Activated B cell treated with CpG ODN at 0.5 μM for 24 hours (primary cell): ENCODE measurements at regions of chrX and their contacts with region 1.

Region 1: DNA sequence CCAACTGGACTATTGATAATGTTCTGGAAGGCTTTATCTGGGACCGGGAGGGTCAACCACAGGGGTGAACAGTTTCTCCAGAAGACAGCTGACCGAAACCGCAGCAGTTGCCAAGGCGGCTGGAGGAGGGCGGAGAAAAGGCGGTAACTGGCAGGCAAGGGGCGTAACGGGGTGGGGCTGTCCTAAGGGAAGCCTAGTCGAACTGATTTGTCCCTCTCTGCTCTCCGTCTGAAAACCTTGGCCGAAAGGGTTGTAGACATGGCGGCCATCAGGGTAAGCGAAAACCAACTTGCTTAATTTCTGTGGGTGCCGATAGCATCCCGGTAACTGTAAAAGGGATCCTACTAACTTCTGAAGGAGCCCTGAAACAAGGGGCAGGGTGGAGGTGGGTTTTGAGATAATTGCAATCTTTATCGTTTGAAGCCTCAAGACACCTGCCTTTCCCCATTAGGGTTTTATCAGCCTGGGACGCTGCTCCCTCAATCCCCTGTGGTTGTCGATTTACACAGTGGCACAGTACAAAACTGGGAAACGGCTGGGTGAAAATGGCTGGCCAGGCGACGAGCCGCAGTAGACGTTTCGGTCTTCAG is at the start of gene APOOL:
- DNase-seq: peak; percentile 55
- ATAC-seq: peak; percentile 98
- H3K4me3 Mint-ChIP-seq: peak within 1 kb of the TSS; percentile 89
- H3K27ac Mint-ChIP-seq: peak within 1 kb of the TSS; percentile 71
- H3K4me1 Mint-ChIP-seq: peaks cover 13% of the 10 kb centered on the region
- H3K27me3 Mint-ChIP-seq: no peaks in the 10 kb centered on the region
- CTCF ChIP-seq: no peak
- total RNA-seq, gene APOOL: 13.4 and 14.6 TPM in 2 replicates

Region 2: GRCh38 chrX:84188320-84188834 is 815.4 kb before region 1 on chrX:
- CTCF ChIA-PET with region 1: no interaction called
- POLR2A ChIA-PET with region 1: no interaction called
- intact Hi-C with region 1: loop called (anchors 5 kb)
- DNase-seq: no peak
- ATAC-seq: no peak
- H3K4me3 Mint-ChIP-seq: peak overlapping the region; percentile 62
- H3K27ac Mint-ChIP-seq: no peak overlapping the region
- H3K4me1 Mint-ChIP-seq: peaks cover 6% of the 10 kb centered on the region
- H3K27me3 Mint-ChIP-seq: peaks cover 7% of the 10 kb centered on the region
- CTCF ChIP-seq: no peak

Region 3: DNA sequence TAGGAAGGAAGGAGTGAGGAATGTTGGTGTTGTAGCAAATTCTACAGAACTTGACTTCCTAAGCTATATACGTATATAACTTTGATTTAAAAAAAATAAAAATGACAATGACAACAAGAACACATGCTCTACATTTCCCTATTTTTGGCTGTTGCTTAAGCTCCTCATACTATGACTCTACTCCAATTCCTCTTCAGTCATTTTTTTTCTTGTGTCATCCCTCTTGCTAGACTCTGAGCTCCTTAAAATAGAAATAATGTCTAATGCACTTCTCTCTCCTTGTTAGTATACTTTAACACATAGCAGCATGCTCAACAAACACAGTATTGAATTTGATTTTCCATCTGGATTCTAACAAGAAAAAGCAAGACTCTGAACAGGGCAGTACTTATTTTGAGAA is 645.5 kb before region 1 on chrX:
- CTCF ChIA-PET with region 1: no interaction called
- POLR2A ChIA-PET with region 1: no interaction called
- intact Hi-C with region 1: no loop called
- DNase-seq: no peak
- ATAC-seq: no peak
- H3K4me3 Mint-ChIP-seq: no peak overlapping the region
- H3K27ac Mint-ChIP-seq: no peak overlapping the region
- H3K4me1 Mint-ChIP-seq: no peaks in the 10 kb centered on the region
- H3K27me3 Mint-ChIP-seq: no peaks in the 10 kb centered on the region
- CTCF ChIP-seq: no peak

Region 4: GRCh38 chrX:84501798-84502628 is 501.7 kb before region 1 on chrX and contains the start of gene HDX:
- CTCF ChIA-PET with region 1: no interaction called
- POLR2A ChIA-PET with region 1: no interaction called
- intact Hi-C with region 1: loop called (anchors 5 kb)
- DNase-seq: peak; percentile 30
- ATAC-seq: peak; percentile 96
- H3K4me3 Mint-ChIP-seq: peak within 1 kb of the TSS; percentile 87
- H3K27ac Mint-ChIP-seq: peak within 1 kb of the TSS; percentile 89
- H3K4me1 Mint-ChIP-seq: peaks cover 5% of the 10 kb centered on the region
- H3K27me3 Mint-ChIP-seq: no peaks in the 10 kb centered on the region
- CTCF ChIP-seq: no peak
- total RNA-seq, gene HDX: 2.5 and 2.9 TPM in 2 replicates

Region 5: GRCh38 chrX:86047174-86047935 is 1043.6 kb after region 1 on chrX and contains the start of gene CHM:
- CTCF ChIA-PET with region 1: no interaction called
- POLR2A ChIA-PET with region 1: no interaction called
- intact Hi-C with region 1: loop called (anchors 5 kb)
- DNase-seq: peak; percentile 31
- ATAC-seq: peak; percentile 93
- H3K4me3 Mint-ChIP-seq: no peak within 1 kb of the TSS
- H3K27ac Mint-ChIP-seq: no peak within 1 kb of the TSS
- H3K4me1 Mint-ChIP-seq: peaks cover 4% of the 10 kb centered on the region
- H3K27me3 Mint-ChIP-seq: no peaks in the 10 kb centered on the region
- CTCF ChIP-seq: no peak
- total RNA-seq, gene CHM: 15.3 and 22.9 TPM in 2 replicates